GM12878 (cell line): ENCODE measurements at regions of chr1 and their contacts with region 1.

Region 1: DNA sequence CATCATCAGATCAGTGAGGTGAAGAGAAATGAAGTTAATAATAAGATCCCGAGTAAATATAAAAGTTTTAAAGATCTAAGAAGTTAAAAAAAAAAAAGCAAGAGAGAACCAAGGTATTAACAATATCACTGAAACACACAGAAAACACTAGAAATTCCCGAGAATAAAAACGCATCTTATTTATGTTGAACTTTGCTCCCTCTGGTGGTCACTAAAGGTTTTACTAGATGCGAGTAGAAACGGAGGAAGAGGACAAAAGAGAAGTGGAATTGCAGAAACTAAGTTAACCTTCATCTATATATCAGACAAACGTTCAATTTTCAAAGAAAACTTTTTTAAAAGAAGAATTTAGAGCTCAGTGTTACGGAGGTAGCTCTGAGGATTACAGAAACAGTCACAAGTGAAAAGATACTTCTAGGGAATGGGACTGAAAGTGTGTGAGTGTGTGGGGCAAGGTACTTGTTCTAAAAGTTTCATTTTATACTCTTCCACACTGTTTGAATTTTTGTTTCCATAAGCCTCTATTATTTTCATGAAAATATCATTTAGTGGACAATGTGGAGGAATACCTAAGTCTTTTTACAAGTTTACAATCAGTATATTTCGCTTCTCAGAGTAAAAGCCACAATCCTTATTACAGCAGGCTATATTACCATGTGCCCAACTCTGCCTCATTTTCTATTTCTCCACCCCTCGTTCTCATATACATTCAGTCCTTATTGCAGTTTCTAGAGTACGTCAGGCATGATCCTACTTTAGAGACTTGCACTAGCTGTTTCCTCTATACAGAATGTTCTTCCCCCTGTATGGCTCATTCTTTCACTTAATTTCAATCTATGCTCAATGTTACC is 19.7 kb downstream of the ACBD6 start:
- DNase-seq: no peak
- ATAC-seq: peak; percentile 74
- H3K4me3 ChIP-seq: no peak overlapping the region
- H3K27ac ChIP-seq: no peak overlapping the region
- H3K4me1 ChIP-seq: no peaks in the 10 kb centered on the region
- H3K27me3 ChIP-seq: no peaks in the 10 kb centered on the region
- CTCF ChIP-seq: peak; percentile 61 to 63 (median 62)
- EP300 ChIP-seq: no peak
- POLR2A ChIP-seq: no peak
- RAD21 ChIP-seq: peak; percentile 62

Region 2: GRCh38 chr1:180188091-180188506 is 294.6 kb before region 1 on chr1:
- CTCF ChIA-PET with region 1: interaction called, 20 read pairs
- POLR2A ChIA-PET with region 1: no interaction called
- RAD21 ChIA-PET with region 1: interaction called, 5 read pairs
- SMC1A ChIA-PET with region 1: interaction called, 4 read pairs
- in situ Hi-C with region 1: no loop called
- intact Hi-C with region 1: loop called (anchors 2 kb)
- DNase-seq: no peak
- ATAC-seq: peak; percentile 81
- H3K4me3 ChIP-seq: no peak overlapping the region
- H3K27ac ChIP-seq: no peak overlapping the region
- H3K4me1 ChIP-seq: no peaks in the 10 kb centered on the region
- H3K27me3 ChIP-seq: no peaks in the 10 kb centered on the region
- CTCF ChIP-seq: peak; percentile 51 to 65 (median 54); a peak in 5 of 6 replicates
- EP300 ChIP-seq: no peak
- POLR2A ChIP-seq: no peak
- RAD21 ChIP-seq: peak; percentile 73

Region 3: GRCh38 chr1:180353945-180354344 is 128.7 kb before region 1 on chr1:
- CTCF ChIA-PET with region 1: interaction called, 10 read pairs
- POLR2A ChIA-PET with region 1: no interaction called
- RAD21 ChIA-PET with region 1: interaction called, 3 read pairs
- SMC1A ChIA-PET with region 1: interaction called, 5 read pairs
- in situ Hi-C with region 1: no loop called
- intact Hi-C with region 1: no loop called
- DNase-seq: no peak
- ATAC-seq: no peak
- H3K4me3 ChIP-seq: no peak overlapping the region
- H3K27ac ChIP-seq: no peak overlapping the region
- H3K4me1 ChIP-seq: no peaks in the 10 kb centered on the region
- H3K27me3 ChIP-seq: no peaks in the 10 kb centered on the region
- CTCF ChIP-seq: no peak
- EP300 ChIP-seq: no peak
- POLR2A ChIP-seq: no peak
- RAD21 ChIP-seq: no peak

Region 4: DNA sequence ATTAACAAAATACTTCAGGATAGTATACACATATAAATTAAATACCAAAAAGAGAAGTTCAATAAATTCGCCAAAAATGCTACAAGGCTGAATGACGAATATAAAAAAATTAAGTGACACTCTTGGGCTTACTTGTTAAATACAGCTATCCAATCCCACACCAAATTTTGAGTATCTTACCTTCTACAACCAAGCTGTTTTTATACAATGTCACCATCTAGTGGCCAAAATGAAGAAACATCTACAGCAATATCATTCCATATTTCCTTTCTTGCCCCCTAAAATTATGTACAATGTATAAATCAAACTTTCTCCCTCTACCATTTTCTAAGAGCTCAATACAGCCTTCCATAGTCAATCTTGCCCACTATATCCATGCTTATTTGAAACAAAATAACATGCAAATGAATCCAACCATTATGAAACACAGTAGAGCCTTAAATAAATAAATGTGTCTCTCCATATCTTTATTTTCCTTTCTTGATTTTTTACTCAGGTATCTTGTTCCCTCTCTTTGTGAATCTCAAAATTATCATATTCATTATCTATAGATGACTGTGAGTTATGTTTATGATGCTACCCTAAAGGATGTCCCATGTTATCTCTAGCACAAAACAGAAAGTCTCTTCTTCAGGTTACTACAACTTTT is 66.5 kb before region 1 on chr1:
- CTCF ChIA-PET with region 1: interaction called, 13 read pairs
- POLR2A ChIA-PET with region 1: no interaction called
- RAD21 ChIA-PET with region 1: interaction called, 3 read pairs
- SMC1A ChIA-PET with region 1: interaction called, 4 read pairs
- in situ Hi-C with region 1: no loop called
- intact Hi-C with region 1: no loop called
- DNase-seq: peak; percentile 4
- ATAC-seq: peak; percentile 69
- H3K4me3 ChIP-seq: no peak overlapping the region
- H3K27ac ChIP-seq: no peak overlapping the region
- H3K4me1 ChIP-seq: no peaks in the 10 kb centered on the region
- H3K27me3 ChIP-seq: no peaks in the 10 kb centered on the region
- CTCF ChIP-seq: peak in 2 of 3 experiments; percentile 38 to 42; a peak in 3 of 6 replicates
- EP300 ChIP-seq: no peak
- POLR2A ChIP-seq: no peak
- RAD21 ChIP-seq: peak; percentile 45

Region 5: DNA sequence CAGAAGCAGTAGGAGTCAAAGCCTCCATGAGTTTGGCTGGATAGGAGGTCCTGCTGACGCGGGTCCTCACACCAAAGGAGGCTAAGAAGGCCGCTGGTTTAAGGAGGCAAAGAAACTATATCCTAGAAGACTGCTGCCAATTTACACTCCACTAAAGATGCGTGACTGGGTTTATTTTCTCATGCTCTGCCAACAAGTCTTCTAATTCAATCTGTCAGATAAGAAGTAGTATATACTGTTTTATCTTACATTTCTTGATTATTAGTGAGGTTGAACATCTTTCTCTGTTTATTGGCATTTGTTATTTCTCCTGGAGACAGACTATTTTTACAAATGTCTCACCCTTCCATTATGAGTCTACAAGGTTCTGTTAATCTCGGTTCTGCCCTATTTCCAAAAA is 14.3 kb before region 1 on chr1:
- CTCF ChIA-PET with region 1: interaction called, 19 read pairs
- POLR2A ChIA-PET with region 1: no interaction called
- RAD21 ChIA-PET with region 1: no interaction called
- SMC1A ChIA-PET with region 1: interaction called, 7 read pairs
- in situ Hi-C with region 1: no loop called
- intact Hi-C with region 1: no loop called
- DNase-seq: no peak
- ATAC-seq: no peak
- H3K4me3 ChIP-seq: no peak overlapping the region
- H3K27ac ChIP-seq: no peak overlapping the region
- H3K4me1 ChIP-seq: no peaks in the 10 kb centered on the region
- H3K27me3 ChIP-seq: no peaks in the 10 kb centered on the region
- CTCF ChIP-seq: no peak
- EP300 ChIP-seq: no peak
- POLR2A ChIP-seq: no peak
- RAD21 ChIP-seq: no peak

Region 6: DNA sequence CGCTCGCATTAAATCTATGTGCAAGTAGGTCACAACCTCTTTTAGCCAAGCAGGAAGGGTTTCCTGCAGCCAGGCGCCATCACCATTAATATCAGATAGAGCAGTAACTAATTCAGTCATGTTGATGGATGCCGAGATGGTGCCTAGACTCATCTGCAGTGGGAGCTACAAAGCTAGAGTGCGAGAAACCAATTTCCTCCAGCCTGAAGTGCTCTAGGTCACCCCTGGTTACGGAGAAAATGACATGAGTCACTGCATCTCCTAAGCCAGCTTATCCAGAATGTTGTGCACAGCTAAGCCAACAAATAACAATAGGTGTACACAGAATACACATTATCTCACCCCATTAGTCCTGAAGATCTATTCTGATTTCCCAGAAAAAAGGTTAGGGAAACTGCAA is 112.1 kb after region 1 on chr1:
- CTCF ChIA-PET with region 1: no interaction called
- POLR2A ChIA-PET with region 1: no interaction called
- RAD21 ChIA-PET with region 1: no interaction called
- SMC1A ChIA-PET with region 1: no interaction called
- in situ Hi-C with region 1: no loop called
- intact Hi-C with region 1: no loop called
- DNase-seq: no peak
- ATAC-seq: no peak
- H3K4me3 ChIP-seq: no peak overlapping the region
- H3K27ac ChIP-seq: no peak overlapping the region
- H3K4me1 ChIP-seq: no peaks in the 10 kb centered on the region
- H3K27me3 ChIP-seq: no peaks in the 10 kb centered on the region
- CTCF ChIP-seq: no peak
- EP300 ChIP-seq: no peak
- POLR2A ChIP-seq: no peak
- RAD21 ChIP-seq: no peak